ENCODE measurements at regions of chr14 and their contacts with region 1.

Region 1: GRCh38 chr14:60349663-60350365 is 100.8 kb downstream of the PPM1A start:
- DNase-seq: peak; percentile 40
- ATAC-seq: peak; percentile 39
- H3K4me3 Mint-ChIP-seq: no peak overlapping the region
- H3K27ac Mint-ChIP-seq: no peak overlapping the region
- H3K4me1 Mint-ChIP-seq: no peaks in the 10 kb centered on the region
- H3K27me3 Mint-ChIP-seq: no peaks in the 10 kb centered on the region

Region 2: DNA sequence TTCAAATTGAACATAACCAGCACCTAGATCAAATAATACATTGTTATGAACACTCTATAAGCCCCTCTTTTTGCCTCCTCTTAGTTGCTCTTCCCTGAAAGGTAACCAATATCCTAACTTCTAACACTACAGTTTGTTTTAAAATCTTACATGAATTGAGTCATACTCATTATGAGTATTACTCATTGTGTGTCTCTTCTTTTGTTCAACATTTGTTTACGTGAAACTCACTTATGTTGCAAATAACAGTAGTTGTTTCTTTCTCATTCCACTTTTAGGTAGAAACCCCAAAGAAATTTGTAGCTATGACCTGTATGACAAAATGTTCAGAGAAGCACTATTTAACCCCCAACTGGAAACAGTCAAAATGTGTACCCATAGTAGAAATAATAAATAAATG is 423.3 kb before region 1 on chr14:
- CTCF ChIA-PET with region 1: no interaction called
- POLR2A ChIA-PET with region 1: no interaction called
- intact Hi-C with region 1: no loop called
- DNase-seq: no peak
- ATAC-seq: peak; percentile 73
- H3K4me3 Mint-ChIP-seq: no peak overlapping the region
- H3K27ac Mint-ChIP-seq: no peak overlapping the region
- H3K4me1 Mint-ChIP-seq: peaks cover 15% of the 10 kb centered on the region
- H3K27me3 Mint-ChIP-seq: peaks cover 14% of the 10 kb centered on the region

Region 3: GRCh38 chr14:60561845-60562746 is 212.3 kb after region 1 on chr14:
- CTCF ChIA-PET with region 1: interaction called, 16 read pairs
- POLR2A ChIA-PET with region 1: no interaction called
- intact Hi-C with region 1: loop called (anchors 1 kb)
- DNase-seq: peak; percentile 60
- ATAC-seq: peak; percentile 49
- H3K4me3 Mint-ChIP-seq: no peak overlapping the region
- H3K27ac Mint-ChIP-seq: no peak overlapping the region
- H3K4me1 Mint-ChIP-seq: no peaks in the 10 kb centered on the region
- H3K27me3 Mint-ChIP-seq: peaks cover 1% of the 10 kb centered on the region

Region 4: DNA sequence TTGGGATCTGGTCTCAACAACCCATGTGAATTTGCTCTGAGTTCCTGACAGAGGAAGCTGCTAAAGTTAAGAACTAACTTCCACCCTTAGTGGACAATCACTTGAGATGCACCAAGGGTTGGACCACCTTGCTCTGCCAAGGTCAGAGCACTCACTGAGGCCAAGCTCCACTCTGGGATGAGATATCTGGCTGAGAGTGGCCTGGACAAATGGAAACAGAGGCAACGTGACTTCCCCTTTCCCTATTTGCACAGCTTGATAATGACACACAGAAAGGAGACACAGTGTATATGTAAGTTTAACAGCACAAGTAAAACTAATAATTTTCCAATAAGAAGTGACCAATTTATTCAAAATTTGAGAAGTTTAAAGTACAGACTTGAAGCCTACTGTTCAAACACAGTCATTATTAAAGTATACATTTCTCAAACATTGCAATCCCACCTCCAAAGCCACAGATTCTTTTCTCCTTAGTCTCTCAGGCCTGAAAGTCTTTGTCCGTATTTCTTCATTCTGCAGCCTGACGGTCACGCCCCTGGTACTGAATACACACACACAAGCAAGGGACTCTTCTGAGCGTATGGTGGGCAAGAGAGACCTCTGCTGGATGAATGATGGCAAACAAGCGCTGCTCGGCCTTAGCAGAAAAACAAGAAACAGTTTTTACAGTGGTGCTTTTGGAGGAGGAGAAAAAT is 902.7 kb after region 1 on chr14:
- CTCF ChIA-PET with region 1: interaction called, 4 read pairs
- POLR2A ChIA-PET with region 1: no interaction called
- intact Hi-C with region 1: loop called (anchors 1 to 5 kb)
- DNase-seq: peak; percentile 79
- ATAC-seq: peak; percentile 91
- H3K4me3 Mint-ChIP-seq: no peak overlapping the region
- H3K27ac Mint-ChIP-seq: no peak overlapping the region
- H3K4me1 Mint-ChIP-seq: peaks cover 5% of the 10 kb centered on the region
- H3K27me3 Mint-ChIP-seq: peaks cover 18% of the 10 kb centered on the region